GM10248 (cell line): ENCODE measurements at regions of chr7 and their contacts with region 1.

Region 1: GRCh38 chr7:24979863-24980533 is at the start of gene OSBPL3:
- DNase-seq: peak; percentile 94
- CTCF ChIP-seq: peak; percentile 46

Region 2: GRCh38 chr7:24819916-24820689 is 159.9 kb before region 1 on chr7:
- CTCF ChIA-PET with region 1: interaction called, 24 read pairs
- POLR2A ChIA-PET with region 1: interaction called, 4 read pairs
- DNase-seq: peak; percentile 81
- CTCF ChIP-seq: peak; percentile 75

Region 3: GRCh38 chr7:24882989-24883621 is 96.9 kb before region 1 on chr7:
- CTCF ChIA-PET with region 1: interaction called, 10 read pairs
- POLR2A ChIA-PET with region 1: interaction called, 4 read pairs
- DNase-seq: no peak
- CTCF ChIP-seq: no peak

Region 4: DNA sequence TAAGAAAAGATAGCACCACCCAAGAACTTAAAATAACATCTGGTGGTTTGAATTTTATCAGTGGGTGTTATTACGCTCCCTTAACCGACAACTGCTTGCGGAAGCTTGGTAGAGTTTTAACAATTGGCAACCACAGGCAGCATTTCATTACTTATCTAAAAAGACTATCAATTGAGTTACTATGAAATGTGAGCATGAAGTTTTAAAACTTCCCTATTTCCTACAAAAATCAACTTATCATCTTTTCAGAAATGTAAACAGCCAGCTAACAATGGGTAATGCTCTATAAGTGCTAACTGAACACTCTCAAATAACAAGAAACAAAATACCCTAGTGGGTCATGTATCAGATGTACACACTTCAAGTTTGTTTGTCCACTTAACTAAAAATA is 68.8 kb before region 1 on chr7:
- CTCF ChIA-PET with region 1: interaction called, 14 read pairs
- POLR2A ChIA-PET with region 1: no interaction called
- DNase-seq: no peak
- CTCF ChIP-seq: no peak

Region 5: GRCh38 chr7:24948739-24949138 is 31.3 kb before region 1 on chr7:
- CTCF ChIA-PET with region 1: interaction called, 21 read pairs
- POLR2A ChIA-PET with region 1: interaction called, 4 read pairs
- DNase-seq: no peak
- CTCF ChIP-seq: no peak

Region 6: GRCh38 chr7:25125137-25125946 is 145.3 kb after region 1 on chr7 and contains the start of gene CYCS:
- CTCF ChIA-PET with region 1: interaction called, 3 read pairs
- POLR2A ChIA-PET with region 1: interaction called, 17 read pairs
- DNase-seq: peak; percentile 93
- CTCF ChIP-seq: no peak

Region 7: GRCh38 chr7:25656581-25657026 is 676.6 kb after region 1 on chr7:
- CTCF ChIA-PET with region 1: no interaction called
- POLR2A ChIA-PET with region 1: no interaction called
- DNase-seq: no peak
- CTCF ChIP-seq: no peak